Panc1 (cell line): ENCODE measurements at regions of chr12 and their contacts with region 1.

Region 1: GRCh38 chr12:120292661-120293531 is at the start of gene RNU4-1:
- DNase-seq: peak; percentile 86
- ATAC-seq: peak; percentile 69
- H3K4me3 ChIP-seq: peak within 1 kb of the TSS; percentile 43 to 87
- H3K27ac ChIP-seq: peak within 1 kb of the TSS; percentile 98
- H3K4me1 ChIP-seq: peaks cover 15% of the 10 kb centered on the region
- H3K27me3 ChIP-seq: no peaks in the 10 kb centered on the region
- CTCF ChIP-seq: no peak
- total RNA-seq, gene RNU4-1: 1,565 TPM

Region 2: DNA sequence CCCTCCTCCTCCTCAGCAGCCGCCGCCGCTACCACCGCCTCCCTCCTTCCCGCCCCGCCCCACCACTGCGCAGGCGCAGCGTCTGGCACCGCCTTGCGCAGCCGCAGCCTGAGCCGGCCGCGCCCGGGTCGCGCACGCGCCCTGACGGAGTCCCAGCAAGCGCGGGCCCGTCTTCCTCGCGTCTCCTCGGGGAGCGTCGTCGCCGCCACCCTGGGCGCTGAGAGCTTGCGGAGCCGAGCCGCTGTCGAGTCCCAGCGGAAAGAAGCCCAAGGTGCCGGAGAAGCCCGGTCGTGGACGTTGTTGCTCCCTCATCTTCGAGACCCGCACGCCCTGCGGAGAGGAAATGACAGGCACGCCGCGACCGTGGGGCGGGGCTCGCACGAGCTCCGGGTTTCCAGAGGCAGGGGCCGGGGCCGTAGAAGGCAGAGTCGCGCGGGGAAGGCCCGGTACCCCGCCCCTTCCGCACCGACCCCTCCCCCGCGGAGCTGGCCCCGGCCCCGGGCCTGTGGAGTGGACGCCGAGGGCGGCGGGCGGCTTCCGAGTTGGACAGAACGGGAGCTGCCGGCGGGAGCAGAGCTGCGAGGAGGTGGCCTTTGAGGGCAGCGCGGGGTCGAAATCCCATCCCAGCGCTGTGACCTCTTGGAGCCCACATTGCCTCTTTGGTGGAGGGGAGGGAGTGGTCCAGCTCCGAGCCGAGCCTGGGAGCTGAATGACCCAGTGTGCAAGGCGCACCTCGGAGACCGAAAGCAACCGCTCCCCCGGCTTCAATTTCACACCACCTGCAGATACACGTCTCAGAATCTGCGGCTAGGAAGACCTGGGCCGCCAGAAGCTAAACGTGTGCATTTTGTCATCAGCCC is 175.9 kb before region 1 on chr12:
- CTCF ChIA-PET with region 1: no interaction called
- POLR2A ChIA-PET with region 1: interaction called, 10 read pairs
- in situ Hi-C with region 1: no loop called
- intact Hi-C with region 1: no loop called
- DNase-seq: peak; percentile 39
- ATAC-seq: peak; percentile 86
- H3K4me3 ChIP-seq: peak overlapping the region; percentile 79 to 80
- H3K27ac ChIP-seq: peak overlapping the region; percentile 55
- H3K4me1 ChIP-seq: peaks cover 17% of the 10 kb centered on the region
- H3K27me3 ChIP-seq: no peaks in the 10 kb centered on the region
- CTCF ChIP-seq: no peak

Region 3: GRCh38 chr12:120181991-120182631 is 110.8 kb before region 1 on chr12:
- CTCF ChIA-PET with region 1: no interaction called
- POLR2A ChIA-PET with region 1: interaction called, 14 read pairs
- in situ Hi-C with region 1: no loop called
- intact Hi-C with region 1: no loop called
- DNase-seq: no peak
- ATAC-seq: peak; percentile 54
- H3K4me3 ChIP-seq: no peak overlapping the region
- H3K27ac ChIP-seq: no peak overlapping the region
- H3K4me1 ChIP-seq: no peaks in the 10 kb centered on the region
- H3K27me3 ChIP-seq: no peaks in the 10 kb centered on the region
- CTCF ChIP-seq: no peak

Region 4: GRCh38 chr12:120228291-120229070 is 64.4 kb before region 1 on chr12:
- CTCF ChIA-PET with region 1: interaction called, 13 read pairs
- POLR2A ChIA-PET with region 1: interaction called, 28 read pairs
- in situ Hi-C with region 1: no loop called
- intact Hi-C with region 1: no loop called
- DNase-seq: no peak
- ATAC-seq: peak; percentile 35
- H3K4me3 ChIP-seq: peak overlapping the region in 1 of 2 experiments; percentile 3; a peak in 1 of 4 replicates
- H3K27ac ChIP-seq: peak overlapping the region; percentile 100
- H3K4me1 ChIP-seq: peaks cover 98% of the 10 kb centered on the region
- H3K27me3 ChIP-seq: no peaks in the 10 kb centered on the region
- CTCF ChIP-seq: peak; percentile 92

Region 5: GRCh38 chr12:120242275-120242799 is 50.6 kb before region 1 on chr12:
- CTCF ChIA-PET with region 1: no interaction called
- POLR2A ChIA-PET with region 1: interaction called, 17 read pairs
- in situ Hi-C with region 1: no loop called
- intact Hi-C with region 1: no loop called
- DNase-seq: no peak
- ATAC-seq: no peak
- H3K4me3 ChIP-seq: no peak overlapping the region
- H3K27ac ChIP-seq: peak overlapping the region; percentile 87
- H3K4me1 ChIP-seq: peaks cover 95% of the 10 kb centered on the region
- H3K27me3 ChIP-seq: no peaks in the 10 kb centered on the region
- CTCF ChIP-seq: no peak

Region 6: DNA sequence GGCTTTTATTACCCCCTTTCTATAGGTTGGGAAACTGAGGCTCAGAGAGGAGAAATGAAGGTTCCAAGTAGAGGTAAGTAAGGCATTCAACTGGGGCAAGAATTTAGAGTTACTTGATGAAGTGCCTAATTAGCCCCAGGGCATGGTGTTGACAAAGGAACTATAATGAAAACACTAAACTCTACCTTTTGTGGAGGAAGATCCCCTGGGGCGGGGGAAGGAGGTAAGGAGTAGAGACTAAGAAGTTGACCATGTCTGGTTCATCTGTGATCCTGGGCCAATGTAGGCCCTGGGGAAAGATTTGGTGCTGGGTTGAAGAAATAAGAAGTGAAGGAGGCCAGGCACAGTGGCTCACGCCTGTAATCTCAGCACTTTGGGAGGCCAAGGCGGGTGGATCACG is 128.8 kb after region 1 on chr12:
- CTCF ChIA-PET with region 1: no interaction called
- POLR2A ChIA-PET with region 1: interaction called, 14 read pairs
- in situ Hi-C with region 1: no loop called
- intact Hi-C with region 1: no loop called
- DNase-seq: no peak
- ATAC-seq: no peak
- H3K4me3 ChIP-seq: no peak overlapping the region
- H3K27ac ChIP-seq: no peak overlapping the region
- H3K4me1 ChIP-seq: no peaks in the 10 kb centered on the region
- H3K27me3 ChIP-seq: no peaks in the 10 kb centered on the region
- CTCF ChIP-seq: no peak

Region 7: DNA sequence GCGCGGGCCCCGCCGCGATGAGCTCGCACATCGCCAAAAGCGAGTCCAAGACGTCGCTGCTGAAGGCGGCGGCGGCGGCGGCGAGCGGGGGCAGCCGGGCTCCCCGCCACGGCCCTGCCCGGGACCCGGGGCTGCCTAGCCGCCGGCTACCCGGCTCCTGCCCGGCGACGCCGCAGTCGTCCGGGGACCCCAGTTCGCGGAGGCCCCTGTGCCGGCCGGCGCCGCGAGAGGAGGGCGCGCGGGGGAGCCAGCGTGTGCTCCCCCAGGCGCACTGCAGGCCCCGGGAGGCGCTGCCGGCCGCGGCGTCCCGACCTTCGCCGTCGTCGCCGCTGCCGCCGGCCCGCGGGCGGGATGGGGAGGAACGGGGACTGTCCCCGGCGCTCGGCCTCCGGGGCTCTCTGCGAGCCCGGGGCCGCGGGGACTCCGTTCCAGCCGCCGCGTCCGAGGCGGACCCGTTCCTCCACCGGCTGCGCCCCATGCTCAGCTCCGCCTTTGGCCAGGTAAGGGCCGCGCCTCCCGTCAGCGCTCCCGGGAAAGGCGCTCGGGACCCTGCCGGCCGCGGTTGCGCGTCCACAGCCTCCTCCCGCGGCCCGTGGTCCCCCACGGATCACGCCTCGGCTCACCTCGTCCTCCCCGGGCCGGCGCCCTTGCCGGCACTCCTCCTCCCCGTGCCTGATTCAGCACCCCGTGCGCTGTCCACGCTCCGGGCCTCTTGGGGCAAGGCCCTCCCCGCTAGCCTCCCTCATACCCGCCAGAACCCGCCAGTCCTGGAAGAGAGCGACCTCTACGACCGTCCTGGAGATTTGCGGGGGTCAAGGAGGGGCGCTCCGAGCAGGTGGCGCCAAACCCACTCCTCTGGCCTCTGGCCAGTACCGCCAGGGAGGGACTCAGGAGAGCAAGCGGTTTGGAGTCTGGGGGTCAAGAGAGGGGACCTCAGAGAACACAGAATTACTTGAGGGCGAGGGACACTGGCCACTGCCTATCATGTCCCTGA is 348.2 kb after region 1 on chr12:
- CTCF ChIA-PET with region 1: no interaction called
- POLR2A ChIA-PET with region 1: no interaction called
- in situ Hi-C with region 1: no loop called
- intact Hi-C with region 1: no loop called
- DNase-seq: no peak
- ATAC-seq: peak; percentile 80
- H3K4me3 ChIP-seq: peak overlapping the region; percentile 27 to 28
- H3K27ac ChIP-seq: no peak overlapping the region
- H3K4me1 ChIP-seq: no peaks in the 10 kb centered on the region
- H3K27me3 ChIP-seq: peaks cover 9% of the 10 kb centered on the region
- CTCF ChIP-seq: no peak